ENCODE measurements at regions of chr2 and their contacts with region 1.

Region 1: GRCh38 chr2:118216224-118216623 is 128.0 kb downstream of the INSIG2 start:
- DNase-seq: no peak
- ATAC-seq: no peak
- H3K4me3 Mint-ChIP-seq: no peak overlapping the region
- H3K27ac Mint-ChIP-seq: no peak overlapping the region
- H3K4me1 Mint-ChIP-seq: no peaks in the 10 kb centered on the region
- H3K27me3 Mint-ChIP-seq: peaks cover 33% of the 10 kb centered on the region

Region 2: GRCh38 chr2:117958186-117958585 is 258.0 kb before region 1 on chr2:
- CTCF ChIA-PET with region 1: no interaction called
- POLR2A ChIA-PET with region 1: no interaction called
- intact Hi-C with region 1: no loop called
- DNase-seq: no peak
- ATAC-seq: no peak
- H3K4me3 Mint-ChIP-seq: no peak overlapping the region
- H3K27ac Mint-ChIP-seq: no peak overlapping the region
- H3K4me1 Mint-ChIP-seq: no peaks in the 10 kb centered on the region
- H3K27me3 Mint-ChIP-seq: no peaks in the 10 kb centered on the region

Region 3: DNA sequence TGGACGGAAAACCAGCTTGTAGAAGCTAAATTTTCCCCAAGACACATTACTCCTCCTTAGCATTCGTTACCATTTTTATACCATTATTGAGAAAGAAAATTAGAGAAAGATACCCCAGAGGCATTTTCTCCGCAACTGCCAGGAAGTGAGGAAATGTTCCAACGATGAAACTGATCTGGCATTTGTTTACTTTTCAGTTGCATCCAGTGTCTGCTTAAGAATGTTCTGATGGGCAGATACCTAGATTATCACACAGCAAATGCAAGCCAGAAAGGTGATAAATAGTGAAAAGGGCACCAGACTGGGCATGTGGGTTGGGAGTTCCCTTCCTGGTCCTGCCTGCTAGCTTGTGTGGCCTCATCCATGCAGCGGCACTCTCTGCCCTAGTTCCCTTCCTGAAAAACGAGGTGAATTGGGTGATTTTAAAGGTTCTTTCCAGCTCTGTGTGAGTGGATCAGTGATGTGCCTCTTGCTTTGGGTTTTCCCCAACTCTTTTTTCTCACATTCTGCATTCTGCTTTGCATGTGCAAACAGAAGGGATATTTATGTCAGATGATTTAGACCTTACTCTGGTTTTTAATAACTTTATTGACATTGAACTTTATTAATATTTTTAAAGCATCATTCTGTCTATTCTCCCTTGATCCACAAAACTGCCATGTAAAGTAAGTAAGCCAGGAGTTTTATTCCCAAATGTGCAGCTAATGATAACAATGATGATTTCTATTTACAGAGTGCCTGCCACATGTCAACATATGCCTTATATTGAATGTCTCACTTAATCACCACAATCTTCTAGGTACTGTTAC is 11.7 kb after region 1 on chr2:
- CTCF ChIA-PET with region 1: interaction called, 6 read pairs
- POLR2A ChIA-PET with region 1: no interaction called
- intact Hi-C with region 1: loop called in 1 of 2 experiments (anchors 1 kb)
- DNase-seq: no peak
- ATAC-seq: no peak
- H3K4me3 Mint-ChIP-seq: no peak overlapping the region
- H3K27ac Mint-ChIP-seq: no peak overlapping the region
- H3K4me1 Mint-ChIP-seq: peaks cover 14% of the 10 kb centered on the region
- H3K27me3 Mint-ChIP-seq: peaks cover 39% of the 10 kb centered on the region

Region 4: DNA sequence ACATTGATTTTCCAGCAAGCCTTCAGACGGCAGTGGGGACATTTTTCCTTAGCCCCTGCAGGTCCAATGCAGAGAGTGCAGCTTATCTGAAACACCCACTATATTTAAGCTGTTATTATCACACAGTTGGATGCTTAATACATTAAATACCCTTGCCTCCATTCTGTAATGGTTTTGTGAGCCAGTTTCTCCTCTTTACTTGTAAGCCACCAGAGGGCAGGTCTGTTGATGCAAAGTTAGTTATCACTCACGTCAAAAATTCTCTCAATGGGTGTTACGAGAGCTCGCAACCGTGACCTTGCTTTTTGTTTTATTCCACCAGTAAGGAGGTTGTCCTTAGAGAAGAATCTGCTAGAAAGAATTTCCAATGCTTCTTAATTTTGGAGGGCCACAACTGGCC is 61.8 kb after region 1 on chr2:
- CTCF ChIA-PET with region 1: no interaction called
- POLR2A ChIA-PET with region 1: no interaction called
- intact Hi-C with region 1: no loop called
- DNase-seq: no peak
- ATAC-seq: no peak
- H3K4me3 Mint-ChIP-seq: no peak overlapping the region
- H3K27ac Mint-ChIP-seq: no peak overlapping the region
- H3K4me1 Mint-ChIP-seq: no peaks in the 10 kb centered on the region
- H3K27me3 Mint-ChIP-seq: peaks cover 20% of the 10 kb centered on the region

Region 5: DNA sequence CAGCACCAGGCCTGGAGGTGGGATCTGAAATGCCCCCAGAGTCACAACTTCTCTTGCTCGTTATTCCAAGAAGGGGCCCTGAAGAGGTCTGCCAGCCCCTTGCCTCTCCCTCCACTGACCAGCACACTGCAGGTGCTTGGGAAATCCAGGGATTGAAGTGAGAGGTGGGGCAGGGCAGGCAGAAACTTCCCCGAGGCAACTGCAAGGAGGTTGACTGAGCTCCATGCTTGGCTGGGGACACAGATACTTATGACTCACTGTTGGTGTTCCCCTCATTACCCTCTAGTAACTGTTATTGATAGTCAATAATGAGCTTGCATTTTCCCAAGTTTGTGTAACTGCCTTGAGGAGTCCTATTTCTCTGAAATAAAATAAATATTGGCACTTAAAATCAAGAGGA is 773.3 kb after region 1 on chr2:
- CTCF ChIA-PET with region 1: no interaction called
- POLR2A ChIA-PET with region 1: no interaction called
- intact Hi-C with region 1: no loop called
- DNase-seq: no peak
- ATAC-seq: no peak
- H3K4me3 Mint-ChIP-seq: no peak overlapping the region
- H3K27ac Mint-ChIP-seq: no peak overlapping the region
- H3K4me1 Mint-ChIP-seq: peaks cover 6% of the 10 kb centered on the region
- H3K27me3 Mint-ChIP-seq: peaks cover 2% of the 10 kb centered on the region